ENCODE measurements at regions of chr13 and their contacts with region 1.

Region 1: GRCh38 chr13:100088644-100089464 is at the start of gene PCCA:
- DNase-seq: peak; percentile 86
- ATAC-seq: peak; percentile 87
- H3K4me3 Mint-ChIP-seq: peak within 1 kb of the TSS; percentile 78
- H3K27ac Mint-ChIP-seq: peak within 1 kb of the TSS; percentile 84
- H3K4me1 Mint-ChIP-seq: peaks cover 14% of the 10 kb centered on the region
- H3K27me3 Mint-ChIP-seq: no peaks in the 10 kb centered on the region
- total RNA-seq, gene PCCA: 5.8 to 7.3 TPM

Region 2: GRCh38 chr13:100075700-100076587 is 12.9 kb before region 1 on chr13:
- CTCF ChIA-PET with region 1: interaction called, 4 read pairs
- POLR2A ChIA-PET with region 1: no interaction called
- intact Hi-C with region 1: loop called (anchors 1 kb)
- DNase-seq: no peak
- ATAC-seq: no peak
- H3K4me3 Mint-ChIP-seq: no peak overlapping the region
- H3K27ac Mint-ChIP-seq: no peak overlapping the region
- H3K4me1 Mint-ChIP-seq: no peaks in the 10 kb centered on the region
- H3K27me3 Mint-ChIP-seq: no peaks in the 10 kb centered on the region

Region 3: DNA sequence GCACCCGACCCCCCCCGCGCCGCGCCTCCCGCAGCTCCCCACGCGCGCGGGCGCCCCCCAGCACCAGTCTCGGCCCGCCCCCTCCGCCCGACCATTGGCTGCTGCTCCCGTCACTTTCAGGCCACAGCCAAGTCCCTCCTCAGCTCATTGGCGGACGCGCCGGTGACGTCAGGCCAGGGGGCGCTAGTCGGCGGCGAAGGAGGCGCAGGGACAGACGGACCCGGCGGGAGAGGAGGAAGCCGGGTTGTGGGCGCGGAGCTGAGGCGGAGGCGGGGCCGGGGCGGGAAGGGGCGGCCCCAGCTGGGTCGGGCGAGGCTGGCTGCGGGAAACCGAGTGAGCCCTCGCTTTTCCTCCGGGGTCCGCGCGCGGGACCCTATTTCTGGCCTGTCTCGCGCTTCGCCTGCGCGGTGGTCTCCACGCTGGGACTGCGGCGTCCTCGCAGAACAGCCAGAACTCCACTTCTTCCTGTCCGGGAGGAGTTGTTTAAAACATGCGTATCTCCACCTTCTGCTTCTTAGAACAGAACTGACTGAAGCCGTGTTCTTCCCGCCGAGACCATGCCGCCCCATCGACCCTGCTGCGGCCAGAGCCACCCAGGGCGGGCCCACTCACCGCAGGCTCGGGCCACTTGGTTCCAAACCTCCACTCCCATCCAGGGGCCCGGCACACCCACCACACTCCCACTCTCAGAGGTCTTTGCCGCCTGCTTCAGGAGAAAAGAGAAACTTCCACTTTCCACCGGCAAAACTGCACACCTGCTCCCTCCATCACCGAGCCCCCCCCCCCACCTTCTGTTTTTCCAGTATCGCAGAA is 586.2 kb after region 1 on chr13:
- CTCF ChIA-PET with region 1: no interaction called
- POLR2A ChIA-PET with region 1: no interaction called
- intact Hi-C with region 1: loop called in 1 of 2 experiments (anchors 1 kb)
- DNase-seq: peak; percentile 99
- ATAC-seq: peak; percentile 96
- H3K4me3 Mint-ChIP-seq: peak overlapping the region; percentile 77
- H3K27ac Mint-ChIP-seq: peak overlapping the region; percentile 83
- H3K4me1 Mint-ChIP-seq: peaks cover 23% of the 10 kb centered on the region
- H3K27me3 Mint-ChIP-seq: peaks cover 7% of the 10 kb centered on the region